Activated CD4-positive, alpha-beta memory T cell treated with anti-CD3 and anti-CD28 coated beads for 36 hours (primary cell): ENCODE measurements at regions of chr5 and their contacts with region 1.

Region 1: GRCh38 chr5:54517174-54518092 is at the start of gene SNX18:
- DNase-seq: peak; percentile 92
- H3K4me3 Mint-ChIP-seq: peak within 1 kb of the TSS; percentile 64
- H3K27ac Mint-ChIP-seq: no peak within 1 kb of the TSS
- H3K4me1 Mint-ChIP-seq: peaks cover 42% of the 10 kb centered on the region
- H3K27me3 Mint-ChIP-seq: no peaks in the 10 kb centered on the region
- total RNA-seq, gene SNX18: 8.5 to 8.7 TPM

Region 2: GRCh38 chr5:54443270-54443669 is 74.2 kb before region 1 on chr5:
- CTCF ChIA-PET with region 1: no interaction called
- POLR2A ChIA-PET with region 1: no interaction called
- intact Hi-C with region 1: no loop called
- DNase-seq: no peak
- H3K4me3 Mint-ChIP-seq: no peak overlapping the region
- H3K27ac Mint-ChIP-seq: no peak overlapping the region
- H3K4me1 Mint-ChIP-seq: peaks cover 7% of the 10 kb centered on the region
- H3K27me3 Mint-ChIP-seq: no peaks in the 10 kb centered on the region

Region 3: GRCh38 chr5:54492178-54492577 is 25.3 kb before region 1 on chr5:
- CTCF ChIA-PET with region 1: interaction called, 11 read pairs
- POLR2A ChIA-PET with region 1: no interaction called
- intact Hi-C with region 1: no loop called
- DNase-seq: no peak
- H3K4me3 Mint-ChIP-seq: no peak overlapping the region
- H3K27ac Mint-ChIP-seq: no peak overlapping the region
- H3K4me1 Mint-ChIP-seq: no peaks in the 10 kb centered on the region
- H3K27me3 Mint-ChIP-seq: peaks cover 4% of the 10 kb centered on the region

Region 4: DNA sequence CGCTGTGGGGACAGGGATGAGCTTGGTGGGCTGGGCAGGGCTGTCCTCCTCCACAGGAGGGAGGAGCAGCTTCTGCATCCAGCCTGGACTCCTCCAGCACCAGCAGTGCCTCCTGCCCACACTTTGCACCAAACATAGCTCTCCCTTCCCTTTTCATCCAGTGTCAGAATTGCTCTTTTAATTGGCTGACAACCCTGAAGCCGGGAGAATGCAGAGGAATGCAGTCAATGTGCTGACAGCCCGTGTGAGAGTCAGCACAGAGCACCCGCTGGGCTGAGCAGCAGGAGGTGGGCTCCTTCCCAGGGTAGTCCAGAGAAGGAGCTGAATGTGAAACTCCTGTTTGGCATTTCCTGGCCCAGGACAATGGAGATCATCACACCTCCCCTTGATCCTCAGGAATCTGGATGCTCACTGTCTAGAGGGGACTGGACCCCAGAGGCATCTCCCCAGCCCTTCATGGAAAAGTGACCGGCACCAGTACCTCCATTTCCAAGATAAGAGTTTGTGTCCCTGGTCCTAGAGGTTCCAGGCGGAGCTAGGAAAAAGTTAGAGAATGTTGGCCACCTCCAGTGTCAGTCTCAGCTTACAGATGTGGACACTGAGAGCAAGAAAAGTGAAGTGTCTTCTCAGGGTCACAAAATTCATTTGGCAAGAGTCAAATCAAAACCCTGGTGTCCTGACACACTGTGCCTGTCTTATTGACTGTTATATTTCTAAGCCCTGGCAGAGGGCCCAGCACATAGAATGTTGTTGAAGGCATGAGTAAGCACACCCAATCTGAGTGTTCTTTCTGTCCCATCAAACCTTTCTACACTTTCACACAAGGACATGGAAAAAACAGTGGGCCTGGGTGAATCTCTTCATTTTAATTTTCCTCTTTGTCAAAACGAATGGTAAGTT is 202.2 kb after region 1 on chr5:
- CTCF ChIA-PET with region 1: interaction called, 4 read pairs
- POLR2A ChIA-PET with region 1: interaction called, 3 read pairs
- intact Hi-C with region 1: loop called (anchors 2 kb)
- DNase-seq: peak; percentile 67
- H3K4me3 Mint-ChIP-seq: no peak overlapping the region
- H3K27ac Mint-ChIP-seq: peak overlapping the region; percentile 42
- H3K4me1 Mint-ChIP-seq: peaks cover 34% of the 10 kb centered on the region
- H3K27me3 Mint-ChIP-seq: peaks cover under 1% of the 10 kb centered on the region

Region 5: DNA sequence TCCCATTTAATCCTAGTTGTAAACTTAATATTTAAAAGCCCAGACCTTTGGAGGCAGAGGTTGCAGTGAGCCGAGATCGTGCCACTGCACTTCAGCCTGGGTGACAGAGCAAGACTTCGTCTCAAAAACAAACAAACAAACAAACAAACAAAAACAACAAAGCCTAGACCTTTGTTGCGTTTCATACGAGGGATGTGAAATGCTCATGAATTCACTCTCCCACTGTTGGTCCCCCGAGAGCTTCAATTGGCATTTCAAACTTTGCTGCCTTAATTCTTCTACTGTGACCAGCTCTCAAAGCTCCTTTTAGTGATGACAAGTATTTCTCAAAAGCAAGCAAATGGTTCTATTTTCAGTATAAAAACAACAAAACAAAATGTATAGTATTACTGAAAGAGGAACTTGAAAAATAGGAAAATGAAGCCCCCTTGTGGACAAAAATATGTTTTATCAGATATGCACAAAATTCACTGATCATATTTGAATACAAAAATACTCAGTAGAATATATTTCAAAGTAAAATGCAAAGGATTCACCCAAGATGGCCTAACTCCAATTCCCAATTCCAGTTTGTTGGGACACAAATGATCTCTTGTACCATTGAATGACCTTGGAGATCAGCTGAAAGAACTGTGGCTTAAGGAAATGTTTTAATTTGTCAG is 327.6 kb after region 1 on chr5:
- CTCF ChIA-PET with region 1: interaction called, 195 read pairs
- POLR2A ChIA-PET with region 1: interaction called, 8 read pairs
- intact Hi-C with region 1: loop called (anchors 1 kb)
- DNase-seq: no peak
- H3K4me3 Mint-ChIP-seq: no peak overlapping the region
- H3K27ac Mint-ChIP-seq: no peak overlapping the region
- H3K4me1 Mint-ChIP-seq: peaks cover under 1% of the 10 kb centered on the region
- H3K27me3 Mint-ChIP-seq: peaks cover 5% of the 10 kb centered on the region

Region 6: GRCh38 chr5:54895816-54896341 is 378.4 kb after region 1 on chr5:
- CTCF ChIA-PET with region 1: interaction called, 14 read pairs
- POLR2A ChIA-PET with region 1: no interaction called
- intact Hi-C with region 1: no loop called
- DNase-seq: no peak
- H3K4me3 Mint-ChIP-seq: no peak overlapping the region
- H3K27ac Mint-ChIP-seq: no peak overlapping the region
- H3K4me1 Mint-ChIP-seq: peaks cover 5% of the 10 kb centered on the region
- H3K27me3 Mint-ChIP-seq: peaks cover 54% of the 10 kb centered on the region

Region 7: GRCh38 chr5:55027595-55027994 is 510.2 kb after region 1 on chr5:
- CTCF ChIA-PET with region 1: no interaction called
- POLR2A ChIA-PET with region 1: no interaction called
- intact Hi-C with region 1: no loop called
- DNase-seq: peak; percentile 54
- H3K4me3 Mint-ChIP-seq: no peak overlapping the region
- H3K27ac Mint-ChIP-seq: peak overlapping the region; percentile 71
- H3K4me1 Mint-ChIP-seq: peaks cover 58% of the 10 kb centered on the region
- H3K27me3 Mint-ChIP-seq: no peaks in the 10 kb centered on the region

Region 8: GRCh38 chr5:55159763-55160492 is 642.5 kb after region 1 on chr5 and contains the start of gene GPX8:
- CTCF ChIA-PET with region 1: interaction called, 10 read pairs
- POLR2A ChIA-PET with region 1: no interaction called
- intact Hi-C with region 1: no loop called
- DNase-seq: no peak
- H3K4me3 Mint-ChIP-seq: no peak within 1 kb of the TSS
- H3K27ac Mint-ChIP-seq: no peak within 1 kb of the TSS
- H3K4me1 Mint-ChIP-seq: no peaks in the 10 kb centered on the region
- H3K27me3 Mint-ChIP-seq: peaks cover 16% of the 10 kb centered on the region
- total RNA-seq, gene GPX8: not detected